ENCODE measurements at regions of chr5 and their contacts with region 1.

Region 1: DNA sequence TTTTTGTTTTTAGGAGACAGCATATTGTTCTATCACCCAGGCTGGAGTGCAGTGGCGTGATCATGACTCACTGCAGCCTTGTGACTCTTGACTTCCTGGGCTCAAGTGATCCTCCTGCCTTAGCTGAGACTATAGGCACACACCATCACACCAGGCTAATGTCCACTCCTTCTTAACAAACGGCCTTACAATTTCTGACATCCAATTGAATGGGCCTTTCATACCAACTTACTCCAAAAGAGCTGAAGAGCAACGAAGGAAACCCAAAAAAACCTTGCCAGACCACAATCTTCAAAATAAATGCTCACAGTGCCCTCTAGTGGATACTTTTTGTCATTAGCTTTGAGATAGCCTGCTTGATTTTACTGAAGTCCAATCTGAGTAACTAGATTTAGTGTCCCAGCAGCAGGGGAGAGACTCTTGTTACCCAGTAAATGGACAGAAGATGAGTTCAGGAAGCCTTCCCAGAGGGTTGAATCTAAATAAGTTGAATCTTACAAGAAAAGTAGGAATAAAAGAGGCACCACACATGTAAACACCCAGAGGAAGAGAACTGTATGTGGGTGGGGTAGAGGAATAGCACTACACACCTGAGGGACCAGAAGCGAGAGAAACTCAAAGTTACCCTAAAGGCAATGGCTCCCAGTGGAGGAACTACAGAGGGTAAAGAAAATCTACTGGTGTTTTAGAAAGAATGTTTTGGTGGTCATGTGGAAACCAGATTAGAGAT is 9.3 kb downstream of the ZNF622 start:
- DNase-seq: no peak
- ATAC-seq: peak; percentile 30 to 83
- H3K4me3 ChIP-seq: no peak overlapping the region
- H3K27ac ChIP-seq: peak overlapping the region; percentile 64
- H3K4me1 ChIP-seq: peaks cover 6% of the 10 kb centered on the region
- H3K27me3 ChIP-seq: no peaks in the 10 kb centered on the region

Region 2: DNA sequence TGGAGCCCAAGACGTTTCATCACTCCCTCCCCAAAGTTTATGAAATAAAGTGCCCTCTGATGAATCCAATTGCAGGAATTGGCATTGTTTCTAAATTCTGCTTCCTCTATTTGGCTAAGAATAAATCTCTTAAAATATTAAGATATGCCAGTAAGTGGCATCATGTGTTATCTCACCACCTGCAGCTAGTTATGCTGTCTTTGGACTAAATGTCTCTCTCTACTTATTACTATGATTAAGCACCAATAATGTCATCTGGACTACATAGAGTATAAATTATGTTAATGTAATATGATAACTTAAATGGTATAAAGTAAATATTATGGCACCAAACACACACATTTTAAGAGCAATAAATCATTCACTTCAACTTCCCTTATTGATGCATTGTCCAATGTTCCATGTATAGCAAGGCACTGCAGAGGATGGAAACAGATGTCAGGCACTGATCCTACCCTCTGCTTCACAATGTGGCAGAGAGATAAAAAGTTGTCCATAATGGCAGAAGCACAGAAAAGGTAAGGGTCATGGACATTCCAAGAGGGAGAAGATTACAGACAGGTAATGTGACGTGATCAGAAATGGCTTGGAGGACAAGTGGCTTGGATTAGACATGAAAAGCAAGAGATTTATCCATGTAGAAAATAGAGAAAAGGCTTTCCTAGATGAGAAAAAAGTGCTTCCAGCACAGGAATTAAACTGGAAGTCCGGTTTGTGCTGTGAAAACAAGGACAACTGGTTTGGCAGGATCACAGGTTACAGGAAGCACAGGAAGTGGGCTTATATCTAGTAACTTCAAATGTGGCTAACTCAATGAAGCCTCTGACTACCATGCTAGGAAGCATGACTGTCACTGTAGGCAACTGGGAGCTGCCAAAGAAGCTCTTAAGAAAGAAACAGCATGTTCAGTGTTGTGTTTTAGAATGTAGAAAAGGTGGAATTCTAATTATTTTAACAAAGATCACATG is 303.4 kb before region 1 on chr5:
- intact Hi-C with region 1: loop called in 2 of 4 experiments (anchors 5 to 10 kb)
- DNase-seq: no peak
- ATAC-seq: no peak
- H3K4me3 ChIP-seq: no peak overlapping the region
- H3K27ac ChIP-seq: no peak overlapping the region
- H3K4me1 ChIP-seq: no peaks in the 10 kb centered on the region
- H3K27me3 ChIP-seq: no peaks in the 10 kb centered on the region

Region 3: GRCh38 chr5:16160706-16161105 is 295.6 kb before region 1 on chr5:
- intact Hi-C with region 1: loop called (anchors 5 to 10 kb)
- DNase-seq: no peak
- ATAC-seq: peak; percentile 75 to 76
- H3K4me3 ChIP-seq: no peak overlapping the region
- H3K27ac ChIP-seq: no peak overlapping the region
- H3K4me1 ChIP-seq: no peaks in the 10 kb centered on the region
- H3K27me3 ChIP-seq: no peaks in the 10 kb centered on the region

Region 4: GRCh38 chr5:16364910-16365309 is 91.4 kb before region 1 on chr5:
- intact Hi-C with region 1: no loop called
- DNase-seq: no peak
- ATAC-seq: no peak
- H3K4me3 ChIP-seq: no peak overlapping the region
- H3K27ac ChIP-seq: no peak overlapping the region
- H3K4me1 ChIP-seq: no peaks in the 10 kb centered on the region
- H3K27me3 ChIP-seq: no peaks in the 10 kb centered on the region

Region 5: GRCh38 chr5:16508730-16509531 is 52.7 kb after region 1 on chr5:
- intact Hi-C with region 1: no loop called
- DNase-seq: peak; percentile 64 to 89 (median 83)
- ATAC-seq: peak; percentile 92 to 93
- H3K4me3 ChIP-seq: peak overlapping the region; percentile 71
- H3K27ac ChIP-seq: peak overlapping the region; percentile 81
- H3K4me1 ChIP-seq: no peaks in the 10 kb centered on the region
- H3K27me3 ChIP-seq: no peaks in the 10 kb centered on the region

Region 6: DNA sequence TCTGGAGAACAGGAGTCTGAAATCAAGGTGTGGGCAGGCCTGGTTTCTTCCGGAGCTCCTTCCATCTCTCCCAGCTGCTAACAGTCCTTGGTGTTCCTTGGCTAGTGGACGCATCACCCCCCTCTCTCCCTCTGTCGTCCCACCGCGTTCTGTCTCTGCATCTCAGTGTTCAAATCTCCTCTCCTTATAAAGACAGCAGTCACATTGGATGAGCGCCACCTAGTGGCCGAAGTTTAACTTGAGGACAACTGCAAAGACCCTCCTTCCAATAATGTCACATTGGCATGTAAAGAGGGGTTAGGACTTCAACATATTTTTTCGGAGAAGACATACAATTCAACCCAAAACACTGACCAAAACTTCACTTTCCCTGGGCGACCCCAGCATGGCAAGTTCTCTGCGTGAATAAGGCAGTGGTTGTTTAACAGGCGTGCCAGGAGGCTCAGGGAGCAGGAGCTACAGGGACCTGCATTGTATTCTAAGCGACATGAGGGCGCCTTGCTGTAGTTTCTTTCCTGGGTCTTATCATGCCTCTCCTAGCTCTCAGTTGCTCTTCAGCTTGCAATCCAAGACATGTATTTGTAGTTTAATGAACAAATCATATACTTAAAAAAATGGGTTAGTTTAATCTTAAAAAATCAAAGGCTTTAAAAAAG is 733.2 kb after region 1 on chr5:
- intact Hi-C with region 1: loop called in 1 of 4 experiments (anchors 5 kb)
- DNase-seq: peak; percentile 82 to 93 (median 83)
- ATAC-seq: peak; percentile 67 to 84
- H3K4me3 ChIP-seq: no peak overlapping the region
- H3K27ac ChIP-seq: no peak overlapping the region
- H3K4me1 ChIP-seq: peaks cover 3% of the 10 kb centered on the region
- H3K27me3 ChIP-seq: no peaks in the 10 kb centered on the region

Measured in right cardiac atrium (tissue), 5 donors.